Heart right ventricle (tissue), 16 donors: ENCODE measurements at regions of chr14 and their contacts with region 1.

Region 1: DNA sequence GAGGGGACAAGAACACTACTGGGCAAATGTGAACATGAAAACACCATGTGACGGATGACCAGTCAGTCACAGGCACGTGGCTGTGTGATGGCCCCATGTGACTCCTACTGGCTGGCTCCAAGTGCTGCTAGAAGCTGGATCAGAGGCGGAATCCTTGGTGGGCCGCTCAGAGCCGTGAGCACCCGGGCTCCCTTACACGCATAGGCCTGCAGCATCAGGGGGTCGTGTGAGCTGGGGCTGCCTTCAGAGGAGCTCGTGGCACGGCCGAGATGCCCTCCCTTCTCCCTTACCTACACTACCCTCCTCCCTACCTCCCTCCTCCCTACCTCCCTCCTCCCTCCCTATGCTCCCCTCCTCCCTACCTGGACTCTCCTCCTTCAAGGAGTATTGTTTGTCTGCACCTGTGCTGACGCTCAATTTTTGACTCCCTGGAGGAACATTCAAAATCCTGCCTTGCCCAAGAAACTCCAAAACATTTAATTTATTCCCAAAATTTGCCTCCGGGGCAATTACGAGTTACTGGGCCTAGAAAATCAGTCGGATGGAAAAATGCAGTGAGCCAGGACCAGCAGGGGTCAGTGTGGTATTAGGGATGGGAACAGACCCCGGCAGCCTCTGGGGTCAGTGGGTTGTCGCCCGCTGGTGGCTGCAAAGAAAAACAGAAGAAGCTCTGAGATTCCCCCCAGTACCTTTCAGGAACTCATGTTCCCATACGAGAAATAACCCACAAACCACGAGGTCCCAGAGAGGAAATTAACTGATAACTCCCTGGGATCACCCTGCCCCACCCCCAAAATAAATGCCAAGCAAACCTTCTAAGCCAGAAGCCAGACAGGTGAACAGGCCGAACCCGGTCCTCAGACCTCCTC is 61.2 kb downstream of the C14orf132 start:
- DNase-seq: peak; percentile 54 to 73
- ATAC-seq: peak in 5 of 8 donors; percentile 42 to 76 (median 67)
- H3K4me3 ChIP-seq: no peak overlapping the region
- H3K27ac ChIP-seq: no peak overlapping the region
- H3K4me1 ChIP-seq: peaks cover 0 to 3% (median 0%) of the 10 kb centered on the region in 9 donors
- H3K27me3 ChIP-seq: peaks cover 0 to 32% (median 26%) of the 10 kb centered on the region in 7 donors
- CTCF ChIP-seq: peak; percentile 46 to 91 (median 80)

Region 2: DNA sequence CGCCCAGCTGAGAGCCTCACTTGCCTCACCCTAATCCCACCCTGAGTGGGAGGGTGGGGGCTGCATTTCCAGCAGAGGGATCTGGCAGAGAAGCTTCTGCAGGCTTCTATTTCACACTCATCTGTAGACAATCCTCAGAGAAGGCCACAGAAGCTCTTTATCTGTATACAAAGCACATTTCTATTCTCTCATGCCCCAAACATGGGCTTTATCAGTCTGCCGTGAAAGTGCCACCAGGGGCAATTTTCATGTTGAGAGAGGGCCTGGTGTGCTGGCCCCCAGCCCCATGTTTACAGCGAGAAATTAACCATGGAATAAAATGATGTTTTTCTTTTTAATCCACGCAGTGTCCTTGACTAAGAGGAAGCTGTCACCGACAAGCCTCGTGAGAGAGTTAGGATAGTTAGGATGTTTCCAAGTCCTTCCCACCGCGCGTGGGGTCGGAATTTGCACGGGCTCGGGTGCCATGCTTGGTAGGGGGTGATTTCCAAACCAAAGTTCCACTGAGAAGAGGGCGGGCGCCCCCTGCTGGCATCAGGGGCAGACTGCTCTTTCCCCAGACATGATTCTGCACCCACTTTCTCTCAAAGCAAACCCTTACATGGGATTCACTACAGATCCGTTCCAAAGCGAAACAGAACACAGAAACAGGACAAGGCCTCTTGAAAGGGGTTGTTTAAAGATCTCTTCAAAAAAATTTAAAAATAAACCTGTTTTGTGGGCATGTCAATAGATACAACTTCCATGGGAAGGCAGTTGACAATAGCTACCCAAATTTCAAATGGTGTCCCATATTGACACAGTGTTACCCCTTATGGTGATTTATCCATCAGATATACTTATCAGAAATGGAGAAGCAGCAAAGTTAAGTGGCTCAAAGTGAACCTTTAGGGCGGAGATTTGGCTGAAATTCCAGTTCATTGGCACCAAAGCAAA is 175.1 kb after region 1 on chr14:
- intact Hi-C with region 1: loop called (anchors 1 to 5 kb)
- DNase-seq: peak; percentile 52 to 73
- ATAC-seq: peak in 6 of 8 donors; percentile 50 to 77 (median 65)
- H3K4me3 ChIP-seq: no peak overlapping the region
- H3K27ac ChIP-seq: peak overlapping the region in 1 of 10 donors; percentile 29
- H3K4me1 ChIP-seq: peaks cover 0 to 10% (median 4%) of the 10 kb centered on the region in 9 donors
- H3K27me3 ChIP-seq: no peaks in the 10 kb centered on the region
- CTCF ChIP-seq: peak; percentile 75 to 98 (median 90)

Region 3: DNA sequence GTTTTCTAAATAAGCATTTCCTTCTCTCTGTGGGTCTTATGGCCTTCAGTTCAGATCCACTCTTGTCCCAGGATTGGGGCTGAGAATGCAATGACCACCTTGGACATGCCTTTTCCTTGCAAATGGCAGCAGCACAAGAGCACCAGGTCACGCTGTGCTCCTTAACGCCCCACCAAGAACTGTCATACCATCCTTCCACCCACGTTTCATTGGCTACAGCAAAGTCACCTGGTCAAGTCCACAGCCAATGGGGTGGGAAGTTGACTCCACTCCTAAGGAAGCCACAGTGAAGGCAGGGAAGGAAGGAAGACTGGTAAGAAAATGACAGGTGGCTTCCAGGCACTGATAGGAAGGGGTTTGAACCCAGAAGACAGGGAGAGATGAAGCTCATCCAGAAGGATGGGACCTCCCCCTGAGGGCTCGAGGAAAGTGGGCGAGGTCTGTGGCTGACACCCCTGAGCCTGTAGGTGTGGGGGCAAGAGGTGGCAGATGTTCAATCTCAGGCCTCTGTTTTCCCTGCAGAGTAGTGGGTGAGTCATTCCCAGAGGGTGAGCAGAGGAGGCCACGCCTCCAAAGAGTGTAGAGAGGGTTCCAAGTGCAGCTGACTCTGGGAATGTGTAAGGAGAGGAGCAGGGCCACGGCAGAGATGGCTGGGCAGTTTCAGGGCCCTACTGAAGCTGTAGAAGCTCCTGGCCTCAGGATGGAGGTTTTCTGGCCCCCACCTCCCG is 583.3 kb after region 1 on chr14:
- intact Hi-C with region 1: no loop called
- DNase-seq: no peak
- ATAC-seq: no peak
- H3K4me3 ChIP-seq: no peak overlapping the region
- H3K27ac ChIP-seq: no peak overlapping the region
- H3K4me1 ChIP-seq: no peaks in the 10 kb centered on the region
- H3K27me3 ChIP-seq: peaks cover 0 to 20% (median 0%) of the 10 kb centered on the region in 7 donors
- CTCF ChIP-seq: no peak